B cell (primary cell): ENCODE measurements at regions of chr4 and their contacts with region 1.

Region 1: DNA sequence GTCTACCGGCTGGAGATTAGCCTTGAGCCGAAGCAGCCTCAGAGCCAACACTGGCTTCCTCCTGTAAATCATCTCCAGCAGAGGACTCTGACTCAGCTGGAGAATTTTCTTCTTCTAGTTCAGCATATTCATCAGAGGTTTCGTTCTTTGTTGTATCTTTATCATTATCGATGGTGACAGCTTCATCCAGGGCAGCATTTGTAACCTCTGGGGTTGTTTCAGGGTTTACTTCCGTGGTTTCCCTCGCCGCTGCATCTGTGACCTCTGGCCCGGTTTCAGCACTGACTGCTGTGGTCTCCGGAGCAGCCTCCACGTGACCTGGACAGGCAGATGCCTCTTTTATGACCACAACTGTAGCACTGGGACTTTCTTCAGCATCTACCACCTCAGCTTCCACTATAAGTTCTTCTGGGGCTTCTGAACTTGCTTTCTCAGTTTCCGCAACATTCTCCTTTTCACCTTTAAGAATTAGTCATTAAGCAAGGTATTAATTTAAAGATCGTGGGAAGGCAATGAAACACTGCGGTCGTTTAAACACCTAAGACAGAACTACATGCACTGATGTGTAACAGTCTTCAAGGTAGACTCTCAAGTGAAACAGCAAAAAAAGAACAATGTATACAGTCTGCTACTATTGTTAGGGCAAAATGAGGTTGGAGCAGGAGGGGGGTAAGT is 13.3 kb downstream of the MGARP start:
- DNase-seq: peak; percentile 76
- ATAC-seq: peak; percentile 97
- H3K4me3 ChIP-seq: peak overlapping the region in 4 of 5 experiments; percentile 14 to 50 (median 35)
- H3K4me3 Mint-ChIP-seq: peak overlapping the region; percentile 80
- H3K27ac ChIP-seq: no peak overlapping the region
- H3K27ac Mint-ChIP-seq: peak overlapping the region; percentile 51
- H3K4me1 ChIP-seq: peaks cover 10 to 11% of the 10 kb centered on the region in 2 donors
- H3K4me1 Mint-ChIP-seq: peaks cover 13% of the 10 kb centered on the region
- H3K27me3 ChIP-seq: no peaks in the 10 kb centered on the region
- H3K27me3 Mint-ChIP-seq: no peaks in the 10 kb centered on the region
- CTCF ChIP-seq: no peak

Region 2: GRCh38 chr4:139177868-139178611 is 88.7 kb before region 1 on chr4:
- CTCF ChIA-PET with region 1: no interaction called
- POLR2A ChIA-PET with region 1: no interaction called
- intact Hi-C with region 1: no loop called
- DNase-seq: peak; percentile 94
- ATAC-seq: peak; percentile 75
- H3K4me3 ChIP-seq: peak overlapping the region; percentile 47 to 89 (median 79)
- H3K4me3 Mint-ChIP-seq: peak overlapping the region; percentile 95
- H3K27ac ChIP-seq: peak overlapping the region; percentile 87 to 95
- H3K27ac Mint-ChIP-seq: peak overlapping the region; percentile 94
- H3K4me1 ChIP-seq: peaks cover 12 to 15% of the 10 kb centered on the region in 2 donors
- H3K4me1 Mint-ChIP-seq: peaks cover 23% of the 10 kb centered on the region
- H3K27me3 ChIP-seq: no peaks in the 10 kb centered on the region
- H3K27me3 Mint-ChIP-seq: no peaks in the 10 kb centered on the region
- CTCF ChIP-seq: no peak

Region 3: DNA sequence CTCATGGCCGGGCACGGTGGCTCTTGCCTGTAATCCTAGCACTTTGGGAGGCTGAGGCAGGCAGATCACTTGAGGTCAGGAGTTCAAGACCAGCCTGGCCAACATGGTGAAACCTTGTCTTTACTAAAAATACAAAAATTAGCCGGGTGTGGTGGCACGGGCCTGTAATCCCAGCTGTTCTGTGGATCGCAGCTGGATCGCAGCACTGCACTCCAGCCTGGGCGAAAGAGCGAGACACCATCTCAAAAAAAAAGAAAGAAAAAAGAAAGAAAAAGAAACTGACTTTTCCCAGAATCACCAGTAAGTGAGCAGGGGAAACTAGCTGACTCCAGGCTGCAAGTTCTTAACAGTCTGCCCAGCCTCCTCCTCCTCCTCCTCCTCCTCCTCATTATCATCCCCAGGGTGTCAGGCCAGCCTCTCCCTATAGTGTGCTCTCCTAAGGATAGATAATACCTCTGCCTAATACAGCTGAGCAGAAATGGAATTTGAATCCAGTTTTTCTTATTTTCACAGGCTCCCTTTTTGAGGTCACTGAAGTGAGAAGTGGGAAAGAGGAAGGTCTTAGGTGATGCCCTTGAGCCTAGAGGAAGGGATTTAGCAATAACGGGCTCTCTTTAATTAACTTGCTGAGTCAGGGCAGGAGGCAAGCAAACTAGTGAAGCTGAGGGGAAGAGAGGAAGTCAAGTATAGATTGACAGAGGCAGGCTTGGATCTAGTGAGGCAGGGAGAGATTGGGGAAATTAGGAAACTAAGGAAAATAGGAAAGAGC is 77.9 kb before region 1 on chr4:
- CTCF ChIA-PET with region 1: no interaction called
- POLR2A ChIA-PET with region 1: no interaction called
- intact Hi-C with region 1: no loop called
- DNase-seq: no peak
- ATAC-seq: no peak
- H3K4me3 ChIP-seq: no peak overlapping the region
- H3K4me3 Mint-ChIP-seq: no peak overlapping the region
- H3K27ac ChIP-seq: no peak overlapping the region
- H3K27ac Mint-ChIP-seq: no peak overlapping the region
- H3K4me1 ChIP-seq: no peaks in the 10 kb centered on the region
- H3K4me1 Mint-ChIP-seq: no peaks in the 10 kb centered on the region
- H3K27me3 ChIP-seq: no peaks in the 10 kb centered on the region
- H3K27me3 Mint-ChIP-seq: peaks cover 4% of the 10 kb centered on the region
- CTCF ChIP-seq: no peak

Region 4: GRCh38 chr4:139295206-139295941 is 28.7 kb after region 1 on chr4:
- CTCF ChIA-PET with region 1: interaction called, 17 read pairs
- POLR2A ChIA-PET with region 1: no interaction called
- intact Hi-C with region 1: loop called (anchors 1 kb)
- DNase-seq: peak; percentile 96
- ATAC-seq: peak; percentile 98
- H3K4me3 ChIP-seq: peak overlapping the region; percentile 78 to 96 (median 91)
- H3K4me3 Mint-ChIP-seq: peak overlapping the region; percentile 97
- H3K27ac ChIP-seq: peak overlapping the region; percentile 89 to 92
- H3K27ac Mint-ChIP-seq: peak overlapping the region; percentile 96
- H3K4me1 ChIP-seq: peaks cover 16 to 23% of the 10 kb centered on the region in 2 donors
- H3K4me1 Mint-ChIP-seq: peaks cover 26% of the 10 kb centered on the region
- H3K27me3 ChIP-seq: no peaks in the 10 kb centered on the region
- H3K27me3 Mint-ChIP-seq: no peaks in the 10 kb centered on the region
- CTCF ChIP-seq: peak; percentile 93